IMR-90 (cell line): ENCODE measurements at regions of chr2 and their contacts with region 1.

Region 1: GRCh38 chr2:20157193-20157891 is 67.6 kb downstream of the SDC1 start:
- DNase-seq: peak; percentile 54
- ATAC-seq: peak; percentile 48
- H3K4me3 ChIP-seq: no peak overlapping the region
- H3K27ac ChIP-seq: no peak overlapping the region
- H3K4me1 ChIP-seq: peaks cover 2% of the 10 kb centered on the region; the same call in 1 of the 2 replicates
- H3K27me3 ChIP-seq: no peaks in the 10 kb centered on the region
- CTCF ChIP-seq: no peak
- POLR2A ChIP-seq: no peak
- RAD21 ChIP-seq: no peak

Region 2: GRCh38 chr2:20125616-20126015 is 31.7 kb before region 1 on chr2:
- CTCF ChIA-PET with region 1: no interaction called
- POLR2A ChIA-PET with region 1: no interaction called
- dilution Hi-C with region 1: no loop called
- in situ Hi-C with region 1: no loop called
- intact Hi-C with region 1: no loop called
- DNase-seq: no peak
- ATAC-seq: no peak
- H3K4me3 ChIP-seq: no peak overlapping the region
- H3K27ac ChIP-seq: no peak overlapping the region
- H3K4me1 ChIP-seq: no peaks in the 10 kb centered on the region; the same call in 1 of the 2 replicates
- H3K27me3 ChIP-seq: peaks cover 13% of the 10 kb centered on the region
- CTCF ChIP-seq: no peak
- POLR2A ChIP-seq: no peak
- RAD21 ChIP-seq: no peak

Region 3: GRCh38 chr2:20141122-20141762 is 16.1 kb before region 1 on chr2:
- CTCF ChIA-PET with region 1: no interaction called
- POLR2A ChIA-PET with region 1: no interaction called
- dilution Hi-C with region 1: no loop called
- in situ Hi-C with region 1: no loop called
- intact Hi-C with region 1: no loop called
- DNase-seq: peak; percentile 96
- ATAC-seq: peak; percentile 84
- H3K4me3 ChIP-seq: no peak overlapping the region
- H3K27ac ChIP-seq: peak overlapping the region; percentile 35
- H3K4me1 ChIP-seq: peaks cover 9% of the 10 kb centered on the region
- H3K27me3 ChIP-seq: no peaks in the 10 kb centered on the region
- CTCF ChIP-seq: no peak
- POLR2A ChIP-seq: no peak
- RAD21 ChIP-seq: no peak

Region 4: GRCh38 chr2:20190876-20191713 is 33.8 kb after region 1 on chr2:
- CTCF ChIA-PET with region 1: no interaction called
- POLR2A ChIA-PET with region 1: no interaction called
- dilution Hi-C with region 1: no loop called
- in situ Hi-C with region 1: no loop called
- intact Hi-C with region 1: loop called (anchors 5 kb)
- DNase-seq: no peak
- ATAC-seq: no peak
- H3K4me3 ChIP-seq: no peak overlapping the region
- H3K27ac ChIP-seq: no peak overlapping the region
- H3K4me1 ChIP-seq: peaks cover 2% of the 10 kb centered on the region; the same call in 1 of the 2 replicates
- H3K27me3 ChIP-seq: no peaks in the 10 kb centered on the region
- CTCF ChIP-seq: no peak
- POLR2A ChIP-seq: no peak
- RAD21 ChIP-seq: no peak

Region 5: GRCh38 chr2:20207051-20207450 is 49.7 kb after region 1 on chr2:
- CTCF ChIA-PET with region 1: no interaction called
- POLR2A ChIA-PET with region 1: no interaction called
- dilution Hi-C with region 1: no loop called
- in situ Hi-C with region 1: no loop called
- intact Hi-C with region 1: no loop called
- DNase-seq: no peak
- ATAC-seq: no peak
- H3K4me3 ChIP-seq: no peak overlapping the region
- H3K27ac ChIP-seq: no peak overlapping the region
- H3K4me1 ChIP-seq: peaks cover 6% of the 10 kb centered on the region
- H3K27me3 ChIP-seq: no peaks in the 10 kb centered on the region
- CTCF ChIP-seq: no peak
- POLR2A ChIP-seq: no peak
- RAD21 ChIP-seq: no peak